ENCODE measurements at regions of chr3 and their contacts with region 1.

Region 1: DNA sequence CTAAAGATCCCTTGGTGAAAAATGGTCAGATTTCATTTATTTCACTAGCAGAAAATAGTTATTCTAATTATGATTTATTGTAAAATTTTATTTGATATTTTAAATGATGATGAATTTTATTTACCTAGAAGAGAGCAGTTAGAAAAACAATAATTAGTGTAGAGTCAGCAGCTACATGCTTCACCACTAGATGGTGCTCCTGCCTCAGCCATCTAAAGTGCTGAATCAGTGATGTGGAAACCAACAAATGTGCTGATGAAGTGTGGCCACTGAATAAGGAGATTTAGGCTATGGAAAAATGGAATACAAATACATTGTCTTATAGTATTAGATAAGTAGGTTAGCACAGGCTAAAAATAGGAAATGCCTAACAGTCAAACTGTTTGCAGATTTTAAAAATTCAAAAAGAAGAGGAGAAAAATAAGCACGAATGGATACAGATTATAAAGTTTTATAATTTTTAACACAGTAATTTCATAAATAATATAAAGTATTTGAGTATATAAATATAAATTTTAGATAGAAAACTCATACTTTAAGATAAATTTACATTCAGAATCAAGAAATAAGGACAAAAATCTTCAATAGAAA is 109.8 kb downstream of the PPP2R3A start:
- DNase-seq: peak; percentile 47
- H3K4me3 Mint-ChIP-seq: no peak overlapping the region
- H3K27ac Mint-ChIP-seq: no peak overlapping the region
- H3K4me1 Mint-ChIP-seq: peaks cover 10% of the 10 kb centered on the region
- H3K27me3 Mint-ChIP-seq: peaks cover 6% of the 10 kb centered on the region

Region 2: GRCh38 chr3:136250226-136250902 is 175.1 kb after region 1 on chr3 and contains the start of gene PCCB:
- intact Hi-C with region 1: loop called (anchors 1 kb)
- DNase-seq: peak; percentile 88
- H3K4me3 Mint-ChIP-seq: peak within 1 kb of the TSS; percentile 89
- H3K27ac Mint-ChIP-seq: peak within 1 kb of the TSS; percentile 91
- H3K4me1 Mint-ChIP-seq: peaks cover 21% of the 10 kb centered on the region
- H3K27me3 Mint-ChIP-seq: no peaks in the 10 kb centered on the region
- total RNA-seq, gene PCCB: 41.4 and 41.7 TPM in 2 replicates

Region 3: DNA sequence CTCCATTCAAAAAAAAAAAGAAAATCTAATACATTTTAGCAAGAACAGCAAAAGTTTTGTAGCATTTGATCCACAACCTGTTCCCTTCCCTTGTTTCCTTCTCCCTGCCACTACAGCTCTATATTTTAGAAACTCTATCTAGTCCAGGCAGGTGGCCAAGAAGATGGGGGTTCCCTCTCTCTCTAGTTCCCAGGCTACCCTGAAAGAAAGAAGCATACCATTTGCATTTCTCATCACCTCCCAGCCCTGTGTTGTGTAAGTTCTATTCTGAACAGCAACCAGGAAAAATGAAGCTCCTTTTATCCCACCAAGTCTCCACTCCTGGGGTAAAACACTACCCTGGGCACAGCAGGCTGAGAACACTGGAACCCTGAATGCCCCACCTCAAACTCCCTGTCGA is 274.8 kb after region 1 on chr3:
- intact Hi-C with region 1: loop called (anchors 5 kb)
- DNase-seq: no peak
- H3K4me3 Mint-ChIP-seq: no peak overlapping the region
- H3K27ac Mint-ChIP-seq: no peak overlapping the region
- H3K4me1 Mint-ChIP-seq: peaks cover 20% of the 10 kb centered on the region
- H3K27me3 Mint-ChIP-seq: no peaks in the 10 kb centered on the region

Region 4: DNA sequence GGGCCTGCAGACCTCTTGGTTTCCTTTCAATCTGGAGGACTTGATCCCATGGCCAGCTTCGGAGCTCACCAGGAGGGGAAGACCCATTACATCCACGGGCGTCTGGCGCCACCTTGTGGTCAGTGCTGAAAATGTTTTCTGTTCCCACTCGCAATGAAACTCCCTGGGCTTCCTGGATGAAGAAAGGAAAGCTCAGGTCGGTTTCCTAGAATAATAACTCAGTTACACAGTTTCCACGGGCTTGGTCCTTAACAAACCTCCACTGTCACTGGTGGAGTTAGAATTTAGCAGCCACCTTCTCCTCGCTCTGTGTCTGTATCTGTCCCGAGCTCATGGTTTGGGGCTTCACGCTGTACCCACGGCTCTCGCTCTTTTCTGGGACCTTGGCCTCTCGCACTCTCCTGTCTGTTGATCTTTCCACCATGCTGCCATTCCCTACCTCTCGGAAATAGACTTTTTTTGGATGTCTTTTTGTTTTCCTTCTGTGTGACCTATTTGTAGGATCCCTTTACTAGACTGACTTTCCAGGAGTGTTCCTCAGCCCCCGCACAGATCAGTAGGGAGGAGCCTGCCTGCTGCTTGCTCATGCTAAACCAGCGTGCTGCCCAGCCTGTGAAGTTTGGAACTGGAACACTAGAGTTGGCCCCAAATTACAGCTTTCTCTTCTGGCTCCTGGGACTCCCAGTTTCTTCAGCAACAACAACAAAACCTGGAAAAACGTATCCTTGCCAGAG is 938.8 kb after region 1 on chr3:
- intact Hi-C with region 1: loop called (anchors 1 kb)
- DNase-seq: peak; percentile 72
- H3K4me3 Mint-ChIP-seq: peak overlapping the region; percentile 78
- H3K27ac Mint-ChIP-seq: no peak overlapping the region
- H3K4me1 Mint-ChIP-seq: peaks cover 10% of the 10 kb centered on the region
- H3K27me3 Mint-ChIP-seq: no peaks in the 10 kb centered on the region

Region 5: GRCh38 chr3:137105277-137105977 is 1030.1 kb after region 1 on chr3:
- intact Hi-C with region 1: loop called (anchors 1 kb)
- DNase-seq: no peak
- H3K4me3 Mint-ChIP-seq: no peak overlapping the region
- H3K27ac Mint-ChIP-seq: no peak overlapping the region
- H3K4me1 Mint-ChIP-seq: no peaks in the 10 kb centered on the region
- H3K27me3 Mint-ChIP-seq: peaks cover 13% of the 10 kb centered on the region

Region 6: GRCh38 chr3:137970914-137971831 is 1895.9 kb after region 1 on chr3:
- intact Hi-C with region 1: loop called (anchors 1 kb)
- DNase-seq: peak; percentile 22
- H3K4me3 Mint-ChIP-seq: no peak overlapping the region
- H3K27ac Mint-ChIP-seq: no peak overlapping the region
- H3K4me1 Mint-ChIP-seq: peaks cover 5% of the 10 kb centered on the region
- H3K27me3 Mint-ChIP-seq: peaks cover 14% of the 10 kb centered on the region

Measured in activated T-helper 1 cell treated with anti-CD3 and anti-CD28 coated beads, Interleukin-12 subunit alpha, Interleukin-12 subunit beta, Interleukin-2, Interleukin-4 antibody, amounts not matched to agents 30 ng/mL and 10 ng/mL and 1 ng/mL, durations not matched to agents 14 hours and 24 hours and 36 hours (primary cell).